Psoas muscle (tissue), 8 donors: ENCODE measurements at regions of chr7 and their contacts with region 1.

Region 1: DNA sequence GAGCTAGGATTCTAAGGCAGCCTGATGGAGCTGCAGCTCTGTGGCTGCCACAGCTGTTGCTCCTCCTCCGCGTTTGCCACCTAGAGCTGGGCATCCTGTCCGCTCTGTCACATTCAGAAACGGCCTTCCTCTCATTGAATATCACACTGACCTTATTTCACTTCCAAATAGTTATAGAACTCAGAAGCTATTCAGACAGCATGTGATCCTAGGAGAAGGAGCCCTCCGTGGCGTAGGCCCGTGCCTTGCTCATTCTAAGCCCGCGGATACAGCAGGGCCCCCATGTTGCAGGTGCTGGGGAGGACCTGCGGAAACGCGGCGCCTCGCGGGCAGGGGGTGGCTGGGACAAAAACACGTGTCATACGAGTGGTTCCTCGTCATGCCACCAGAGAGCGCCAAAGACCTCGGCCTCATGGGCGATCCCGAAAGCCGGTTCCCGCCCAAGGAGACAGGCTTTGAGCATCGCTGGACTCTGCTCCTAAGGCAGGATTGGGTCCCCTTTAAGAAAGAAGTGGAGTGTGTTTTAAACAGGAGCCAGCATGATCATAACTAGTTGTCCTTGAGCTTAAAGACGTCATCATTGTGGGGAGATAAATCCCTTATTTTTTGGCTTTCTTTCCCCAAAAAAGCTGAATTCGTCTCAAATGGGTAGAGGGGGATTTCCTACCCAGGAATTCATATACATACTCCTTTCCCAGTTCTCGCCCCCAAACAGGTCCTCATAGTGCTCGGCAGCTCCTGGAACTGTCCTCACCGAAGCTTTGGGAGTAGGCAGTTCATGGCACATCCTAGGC is 17.9 kb upstream of the FIGNL1 start:
- DNase-seq: peak; percentile 85 to 93
- ATAC-seq: peak; percentile 87 to 97 (median 89)
- H3K4me3 ChIP-seq: peak overlapping the region; percentile 53
- H3K27ac ChIP-seq: peak overlapping the region; percentile 78
- H3K4me1 ChIP-seq: peaks cover 15% of the 10 kb centered on the region
- H3K27me3 ChIP-seq: no peaks in the 10 kb centered on the region
- CTCF ChIP-seq: peak; percentile 92

Region 2: DNA sequence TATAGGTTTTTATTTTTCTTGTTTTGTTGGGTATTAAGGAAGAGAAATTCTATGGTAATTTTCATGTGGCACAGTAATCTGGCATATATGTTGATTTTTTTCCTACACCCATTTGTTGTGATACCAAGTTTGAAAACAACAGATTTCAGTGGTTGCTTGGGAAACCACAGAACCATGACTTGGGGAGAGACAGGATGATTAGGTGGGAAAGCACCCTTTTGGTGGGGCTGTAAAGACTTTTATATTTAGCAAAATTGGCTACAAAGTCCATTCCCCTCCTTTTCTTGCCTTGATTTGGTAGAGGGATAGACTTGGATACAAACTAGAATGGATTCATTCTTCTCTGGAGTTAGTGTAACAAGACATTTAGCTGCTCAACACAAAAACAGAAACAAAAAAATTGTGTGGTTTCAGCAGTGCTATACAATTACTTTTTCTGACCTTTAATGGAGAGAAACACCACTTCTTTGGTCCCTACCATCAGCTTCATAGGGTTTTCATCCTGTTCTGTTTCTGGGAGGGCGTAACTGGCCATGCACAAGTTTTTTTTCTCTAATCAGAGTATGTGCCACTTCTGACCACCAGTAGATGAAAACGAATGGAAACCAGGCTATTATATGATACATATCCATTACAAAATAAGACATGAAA is 70.6 kb before region 1 on chr7:
- intact Hi-C with region 1: no loop called
- DNase-seq: no peak
- ATAC-seq: no peak
- H3K4me3 ChIP-seq: no peak overlapping the region
- H3K27ac ChIP-seq: no peak overlapping the region
- H3K4me1 ChIP-seq: no peaks in the 10 kb centered on the region
- H3K27me3 ChIP-seq: peaks cover 2 to 33% (median 3%) of the 10 kb centered on the region in 3 donors
- CTCF ChIP-seq: no peak

Region 3: DNA sequence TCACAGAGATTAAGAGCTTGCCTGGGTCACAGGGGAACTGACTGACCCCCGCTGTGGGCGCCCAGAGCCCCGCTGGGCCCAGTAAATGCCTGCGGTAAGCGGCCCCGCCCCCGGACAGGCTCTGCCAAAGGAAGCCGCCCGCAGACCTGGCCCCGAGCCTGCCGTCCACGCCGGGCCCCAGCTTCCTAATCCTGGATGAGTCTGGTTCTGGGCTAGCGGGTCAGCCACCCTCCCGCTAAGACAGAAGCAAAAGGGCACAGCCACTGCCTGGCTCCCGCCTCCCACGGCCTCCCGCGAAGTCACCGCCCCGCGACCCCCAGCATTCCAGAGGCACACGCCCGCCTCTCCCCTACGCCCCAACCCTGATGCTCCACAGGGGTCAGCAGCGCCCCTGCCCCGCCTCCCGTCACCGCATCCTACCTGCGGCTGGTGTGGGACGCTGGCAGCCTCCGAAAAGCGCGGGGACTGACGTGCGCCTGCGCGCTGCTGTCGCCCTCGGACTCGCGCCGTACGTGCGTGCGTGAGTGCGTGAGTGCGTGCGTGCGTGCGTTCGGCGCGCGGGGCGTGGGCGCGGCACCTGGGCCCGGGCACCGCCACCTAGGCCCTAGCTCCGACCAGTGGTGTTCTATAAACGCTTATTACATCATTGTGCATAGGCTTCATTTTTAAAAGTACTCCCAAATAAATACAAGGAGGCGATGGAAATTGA is 18.0 kb before region 1 on chr7 and contains the start of gene FIGNL1:
- intact Hi-C with region 1: no loop called
- DNase-seq: peak; percentile 80 to 89
- ATAC-seq: peak; percentile 96 to 100 (median 98)
- H3K4me3 ChIP-seq: peak within 1 kb of the TSS; percentile 69
- H3K27ac ChIP-seq: peak within 1 kb of the TSS; percentile 70
- H3K4me1 ChIP-seq: peaks cover 6% of the 10 kb centered on the region
- H3K27me3 ChIP-seq: no peaks in the 10 kb centered on the region
- CTCF ChIP-seq: no peak
- total RNA-seq, gene FIGNL1: 3.9 to 13.4 (median 6.8) TPM

Region 4: DNA sequence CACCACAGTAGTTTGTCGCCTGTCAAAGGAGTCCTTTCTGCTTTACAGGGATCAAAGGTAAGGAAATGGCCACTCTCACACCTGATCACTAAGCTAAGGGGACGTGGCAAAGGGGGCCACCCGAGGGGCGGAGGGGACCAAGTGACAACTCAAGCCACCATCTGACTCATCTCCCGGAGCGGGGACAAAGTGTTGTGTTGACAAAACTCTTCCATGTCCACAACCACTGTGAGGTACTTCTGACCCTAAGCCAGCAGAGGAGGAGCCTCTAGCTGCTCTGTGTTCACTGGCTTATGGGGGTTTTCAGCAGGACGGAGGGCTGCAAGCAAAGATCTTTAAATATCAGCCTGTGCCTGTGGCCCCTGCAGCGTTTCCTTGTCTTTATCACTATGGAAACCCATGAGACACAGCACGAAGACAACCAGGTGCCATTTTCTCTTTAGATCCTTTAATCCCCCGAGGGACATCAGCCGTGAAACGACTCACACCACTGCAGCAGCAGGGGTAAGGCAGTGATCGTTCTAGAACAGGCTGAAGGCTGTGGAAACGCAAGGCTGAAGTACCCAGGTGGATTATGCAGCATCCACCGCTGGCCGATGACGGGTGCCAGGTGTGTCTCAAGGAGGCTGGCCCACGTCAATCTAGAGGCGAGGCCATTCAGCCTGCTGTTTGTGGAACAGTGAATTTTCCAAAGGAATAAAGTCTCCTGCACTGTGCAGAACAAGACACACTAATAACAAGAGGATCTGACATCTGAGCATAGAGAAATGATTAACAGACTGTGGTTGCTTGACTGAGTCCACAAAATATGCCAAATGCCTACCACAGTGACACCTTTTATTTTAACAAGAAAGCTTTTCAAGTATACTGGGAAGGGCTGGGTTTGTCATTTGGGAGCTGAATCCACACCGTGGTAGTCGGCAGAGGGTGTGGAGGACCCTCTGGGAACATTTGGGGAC is 123.7 kb after region 1 on chr7:
- intact Hi-C with region 1: loop called (anchors 2 to 5 kb)
- DNase-seq: no peak
- ATAC-seq: no peak
- H3K4me3 ChIP-seq: no peak overlapping the region
- H3K27ac ChIP-seq: no peak overlapping the region
- H3K4me1 ChIP-seq: peaks cover 17% of the 10 kb centered on the region
- H3K27me3 ChIP-seq: no peaks in the 10 kb centered on the region
- CTCF ChIP-seq: no peak

Region 5: DNA sequence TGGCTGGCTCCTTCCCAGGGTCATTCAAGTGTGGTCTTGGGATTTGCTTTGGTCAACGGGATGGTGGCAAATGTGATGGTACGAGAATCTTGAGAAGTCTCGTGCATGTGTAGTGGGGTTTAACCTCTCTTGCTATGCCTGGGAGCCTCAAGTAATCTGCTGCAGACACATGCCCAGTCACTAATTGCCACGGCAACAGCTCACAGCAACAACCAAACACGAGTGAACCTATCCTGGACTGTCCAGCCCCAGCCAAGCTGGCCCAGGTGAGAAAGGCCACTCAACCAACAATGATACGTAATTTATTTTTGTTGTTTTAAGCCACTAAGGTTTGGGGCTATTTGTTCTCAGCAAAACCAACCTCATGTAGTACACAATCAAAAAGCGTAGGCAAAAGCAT is 135.3 kb after region 1 on chr7:
- intact Hi-C with region 1: loop called in 1 of 2 experiments (anchors 5 kb)
- DNase-seq: no peak
- ATAC-seq: no peak
- H3K4me3 ChIP-seq: no peak overlapping the region
- H3K27ac ChIP-seq: no peak overlapping the region
- H3K4me1 ChIP-seq: no peaks in the 10 kb centered on the region
- H3K27me3 ChIP-seq: no peaks in the 10 kb centered on the region
- CTCF ChIP-seq: no peak

Region 6: DNA sequence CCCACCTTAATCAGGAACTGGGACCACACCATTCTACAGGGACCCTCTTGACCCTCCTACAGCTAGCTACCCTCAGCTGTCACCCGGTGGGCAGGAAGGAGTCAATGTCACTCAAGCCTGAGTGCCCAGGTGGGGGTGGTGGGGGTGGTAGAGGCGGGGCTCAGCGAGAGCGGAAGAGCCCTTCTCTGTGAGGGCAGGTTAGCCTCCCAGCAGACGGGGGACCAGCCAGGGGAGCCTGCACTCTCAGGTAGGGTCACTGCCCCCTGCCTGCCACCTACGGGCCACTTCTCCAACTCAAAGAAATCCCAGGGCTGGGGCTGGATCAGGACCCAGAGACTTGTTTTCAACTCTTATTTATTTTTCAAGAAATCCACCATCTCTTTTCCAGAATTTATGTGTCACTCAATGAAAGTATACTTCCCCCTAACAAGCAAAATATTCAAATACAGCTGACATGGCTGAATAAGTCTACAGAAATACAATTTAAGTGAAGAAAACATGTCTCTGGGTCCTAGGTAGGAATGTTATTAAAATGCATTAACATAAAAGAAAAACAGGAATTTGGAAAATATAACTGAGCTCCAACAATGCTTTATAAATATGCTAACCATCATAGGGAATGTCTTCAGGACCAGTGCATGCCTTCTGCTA is 160.5 kb after region 1 on chr7:
- intact Hi-C with region 1: loop called in 1 of 2 experiments (anchors 2 kb)
- DNase-seq: peak in 1 of 2 donors; percentile 59
- ATAC-seq: peak; percentile 29 to 51 (median 42)
- H3K4me3 ChIP-seq: peak overlapping the region; percentile 35
- H3K27ac ChIP-seq: peak overlapping the region; percentile 84
- H3K4me1 ChIP-seq: peaks cover 48% of the 10 kb centered on the region
- H3K27me3 ChIP-seq: no peaks in the 10 kb centered on the region
- CTCF ChIP-seq: peak; percentile 6

Region 7: DNA sequence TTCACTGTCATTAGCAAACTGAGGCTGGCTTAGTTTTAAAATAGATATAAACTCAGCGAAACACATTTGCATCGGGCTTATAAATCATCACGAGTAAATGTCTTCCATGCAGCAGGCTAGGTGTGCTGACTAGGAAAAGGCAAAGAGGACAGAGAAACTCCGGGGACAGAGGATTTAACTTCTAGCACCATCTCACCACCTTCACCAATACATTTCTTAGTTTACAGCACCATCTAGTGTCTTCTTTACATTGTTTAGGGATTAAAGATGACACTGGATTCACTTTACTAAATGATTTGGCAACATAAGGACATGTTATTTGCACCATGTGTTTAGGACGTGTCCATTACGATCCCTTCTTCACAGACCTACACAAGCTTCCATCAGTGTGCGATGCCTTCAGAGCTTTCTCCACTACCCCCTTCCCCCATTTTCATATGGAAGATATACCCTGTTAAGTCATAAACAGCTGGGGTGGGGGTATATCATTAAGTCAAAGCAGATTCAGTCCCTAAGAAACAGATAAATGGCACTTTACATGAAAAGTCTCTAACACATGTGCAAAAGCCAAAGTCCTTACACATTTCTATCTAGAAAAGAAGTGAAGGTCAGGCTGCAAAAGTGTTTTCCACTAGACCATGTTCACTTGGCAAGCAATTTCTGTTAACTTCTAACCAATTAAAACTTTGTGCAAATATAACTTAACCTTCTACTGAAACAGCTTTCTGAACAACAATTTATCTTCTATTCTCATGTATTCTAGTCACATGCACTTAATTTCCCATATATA is 211.4 kb after region 1 on chr7:
- intact Hi-C with region 1: loop called (anchors 2 to 5 kb)
- DNase-seq: no peak
- ATAC-seq: peak; percentile 81 to 89 (median 86)
- H3K4me3 ChIP-seq: no peak overlapping the region
- H3K27ac ChIP-seq: peak overlapping the region; percentile 81
- H3K4me1 ChIP-seq: peaks cover 80% of the 10 kb centered on the region
- H3K27me3 ChIP-seq: no peaks in the 10 kb centered on the region
- CTCF ChIP-seq: peak; percentile 46

Region 8: DNA sequence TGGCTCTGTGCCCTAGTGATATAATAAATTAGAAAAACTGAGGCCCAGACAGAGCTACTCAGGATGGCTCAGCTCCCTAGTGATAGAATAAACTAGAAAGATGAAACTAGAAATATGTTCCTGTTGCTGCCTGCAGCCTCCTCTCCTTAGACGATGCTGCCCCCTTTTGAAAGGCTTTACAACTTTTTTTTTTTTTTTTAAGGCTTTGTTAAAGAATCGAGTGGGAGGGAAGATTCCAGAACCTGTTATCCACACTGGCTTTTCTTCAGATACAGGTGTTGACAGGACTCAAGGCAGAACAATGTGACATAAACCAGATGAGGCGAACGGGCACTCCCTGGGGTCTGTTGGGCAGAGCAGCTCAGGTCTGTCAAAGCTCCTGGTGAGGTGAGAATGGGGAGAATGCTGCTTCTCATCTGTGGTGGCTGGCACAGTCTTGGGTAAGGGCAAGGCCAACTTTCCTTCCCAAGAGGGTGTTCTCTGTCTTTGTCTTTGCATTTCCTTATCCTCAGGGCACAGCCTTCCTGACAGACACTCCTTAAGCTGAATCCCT is 673.5 kb after region 1 on chr7:
- intact Hi-C with region 1: loop called in 1 of 2 experiments (anchors 5 kb)
- DNase-seq: no peak
- ATAC-seq: peak; percentile 43 to 65 (median 48)
- H3K4me3 ChIP-seq: no peak overlapping the region
- H3K27ac ChIP-seq: peak overlapping the region; percentile 20
- H3K4me1 ChIP-seq: peaks cover 6% of the 10 kb centered on the region
- H3K27me3 ChIP-seq: no peaks in the 10 kb centered on the region
- CTCF ChIP-seq: peak; percentile 56

Region 9: DNA sequence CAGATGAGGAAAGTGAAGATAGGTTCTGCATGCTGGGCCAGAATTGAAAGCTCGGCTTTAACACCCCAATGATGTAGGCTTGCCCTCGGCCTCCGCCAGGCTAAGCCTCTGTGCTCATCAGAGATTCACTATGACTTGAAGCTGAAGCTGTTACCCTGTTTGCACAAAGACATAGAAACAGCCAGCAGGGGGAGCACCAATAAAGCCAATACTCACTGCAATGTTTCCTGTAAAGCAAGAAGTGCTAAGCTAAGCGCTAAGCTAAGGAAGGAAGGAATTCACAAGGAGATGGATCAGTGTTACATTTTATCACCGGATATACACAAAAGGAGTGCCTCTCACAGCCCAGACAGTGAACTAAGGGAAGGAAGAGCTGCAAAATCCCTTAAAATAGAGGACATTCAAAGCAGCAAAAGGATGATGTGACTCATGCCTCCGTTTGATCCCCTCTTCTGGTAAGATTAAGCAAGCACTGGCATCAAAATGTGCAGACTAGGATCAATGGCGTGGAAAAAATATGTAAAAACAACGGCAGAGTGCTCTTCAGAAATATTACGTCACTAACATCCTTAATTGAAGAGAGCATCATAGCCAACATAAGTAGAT is 694.8 kb after region 1 on chr7:
- intact Hi-C with region 1: loop called (anchors 2 to 5 kb)
- DNase-seq: peak in 1 of 2 donors; percentile 37
- ATAC-seq: peak; percentile 84 to 94 (median 90)
- H3K4me3 ChIP-seq: no peak overlapping the region
- H3K27ac ChIP-seq: no peak overlapping the region
- H3K4me1 ChIP-seq: peaks cover 12% of the 10 kb centered on the region
- H3K27me3 ChIP-seq: no peaks in the 10 kb centered on the region
- CTCF ChIP-seq: peak; percentile 83